ENCODE measurements at regions of chr2 and their contacts with region 1.

Region 1: GRCh38 chr2:25041928-25042320 is at the start of gene EFR3B:
- DNase-seq: peak; percentile 96 to 98
- H3K4me3 ChIP-seq: peak within 1 kb of the TSS; percentile 62
- H3K4me3 Mint-ChIP-seq: peak within 1 kb of the TSS; percentile 82
- H3K27ac Mint-ChIP-seq: peak within 1 kb of the TSS; percentile 11
- H3K4me1 ChIP-seq: peaks cover 5% of the 10 kb centered on the region; the same call in 1 of the 2 replicates
- H3K4me1 Mint-ChIP-seq: peaks cover 12% of the 10 kb centered on the region
- H3K27me3 ChIP-seq: no peaks in the 10 kb centered on the region
- H3K27me3 Mint-ChIP-seq: no peaks in the 10 kb centered on the region
- CTCF ChIP-seq: no peak
- total RNA-seq, gene EFR3B: 14.5 and 19.1 TPM in 2 replicates

Region 2: DNA sequence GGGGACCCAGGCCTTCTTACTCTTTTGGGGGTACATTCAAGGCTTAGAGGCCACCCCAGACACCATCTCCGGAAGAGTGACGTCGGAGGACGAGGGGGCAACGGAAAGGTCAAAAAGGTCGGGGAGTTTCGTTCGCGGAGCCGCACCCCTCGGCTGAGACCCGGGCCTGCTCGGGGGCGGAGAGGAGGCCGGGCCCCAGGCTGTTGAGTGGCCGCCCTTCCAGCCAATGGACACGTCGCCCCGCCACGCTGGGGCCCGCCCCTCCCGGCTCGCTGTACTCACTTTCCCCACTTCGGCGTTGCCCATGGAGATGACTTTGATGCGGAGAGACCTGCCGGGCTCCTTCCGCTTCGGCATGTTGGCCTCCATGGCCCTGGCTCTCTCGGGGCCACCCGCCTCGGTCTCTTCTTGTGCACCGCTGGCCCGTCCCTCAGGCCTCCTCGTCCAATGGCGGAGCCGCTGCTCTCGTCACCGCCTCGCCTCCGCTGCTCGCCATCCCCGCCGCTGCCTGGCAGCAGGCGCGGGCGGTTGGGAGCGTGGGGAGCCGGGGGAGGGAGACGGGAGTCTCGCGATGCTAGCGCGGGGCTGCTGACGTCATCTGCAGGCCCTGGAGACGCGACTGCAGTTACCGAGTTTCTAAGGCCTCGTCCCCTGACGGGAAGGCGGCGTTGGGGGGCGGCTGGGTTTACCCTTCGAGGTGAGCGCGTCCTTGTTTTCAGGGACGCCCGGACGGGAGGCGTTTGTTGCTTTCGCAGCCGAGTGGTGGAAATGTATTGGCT is 70.2 kb before region 1 on chr2 and contains the start of gene DNAJC27:
- CTCF ChIA-PET with region 1: interaction called, 18 read pairs
- POLR2A ChIA-PET with region 1: no interaction called
- intact Hi-C with region 1: loop called (anchors 1 kb)
- DNase-seq: peak; percentile 98
- H3K4me3 ChIP-seq: peak within 1 kb of the TSS; percentile 55
- H3K4me3 Mint-ChIP-seq: peak within 1 kb of the TSS; percentile 90
- H3K27ac Mint-ChIP-seq: peak within 1 kb of the TSS; percentile 98
- H3K4me1 ChIP-seq: no peaks in the 10 kb centered on the region
- H3K4me1 Mint-ChIP-seq: no peaks in the 10 kb centered on the region
- H3K27me3 ChIP-seq: no peaks in the 10 kb centered on the region
- H3K27me3 Mint-ChIP-seq: no peaks in the 10 kb centered on the region
- CTCF ChIP-seq: no peak
- total RNA-seq, gene DNAJC27: 5.1 and 6.1 TPM in 2 replicates

Region 3: GRCh38 chr2:25009954-25010353 is 32.0 kb before region 1 on chr2:
- CTCF ChIA-PET with region 1: no interaction called
- POLR2A ChIA-PET with region 1: no interaction called
- intact Hi-C with region 1: loop called (anchors 5 kb)
- DNase-seq: no peak
- H3K4me3 ChIP-seq: no peak overlapping the region
- H3K4me3 Mint-ChIP-seq: no peak overlapping the region
- H3K27ac Mint-ChIP-seq: no peak overlapping the region
- H3K4me1 ChIP-seq: peaks cover 6% of the 10 kb centered on the region
- H3K4me1 Mint-ChIP-seq: peaks cover 9% of the 10 kb centered on the region
- H3K27me3 ChIP-seq: no peaks in the 10 kb centered on the region
- H3K27me3 Mint-ChIP-seq: no peaks in the 10 kb centered on the region
- CTCF ChIP-seq: no peak

Region 4: DNA sequence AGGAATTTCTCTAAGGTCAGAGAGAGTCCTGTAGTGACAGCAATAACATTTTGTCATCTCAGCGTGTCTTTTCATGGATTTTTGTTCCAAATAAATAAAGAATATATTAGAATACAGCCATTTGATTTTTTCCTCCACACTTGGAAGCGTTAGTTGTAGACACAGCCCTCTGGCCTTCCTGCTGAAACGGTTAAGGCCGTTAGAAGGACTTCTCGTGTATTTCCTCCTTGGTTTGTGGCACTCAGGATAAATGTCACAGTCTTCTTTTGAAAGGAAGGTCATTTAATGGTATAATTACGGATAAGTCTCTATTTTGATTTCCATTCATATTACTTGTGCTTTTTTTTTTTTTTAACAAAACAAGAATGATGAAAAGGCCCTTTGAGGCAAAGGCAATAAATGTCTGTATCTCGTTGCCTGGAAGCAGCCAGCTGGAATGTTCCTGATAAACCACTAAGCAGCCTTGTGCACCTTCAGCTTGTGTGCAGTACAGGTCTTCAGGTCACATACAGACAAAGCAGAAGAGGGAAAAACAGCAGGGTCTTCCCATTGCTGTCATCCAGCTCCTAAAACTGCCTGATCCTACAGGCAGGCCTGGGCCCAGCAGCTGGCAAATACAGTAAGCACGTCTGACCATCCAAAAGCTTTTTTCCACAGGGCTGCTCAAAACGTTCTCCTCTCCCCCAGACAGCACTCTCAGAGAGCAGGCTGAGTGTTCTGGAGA is 14.3 kb after region 1 on chr2:
- CTCF ChIA-PET with region 1: interaction called, 7 read pairs
- POLR2A ChIA-PET with region 1: interaction called, 5 read pairs
- intact Hi-C with region 1: loop called (anchors 1 kb)
- DNase-seq: peak in 1 of 2 experiments; percentile 57
- H3K4me3 ChIP-seq: no peak overlapping the region
- H3K4me3 Mint-ChIP-seq: no peak overlapping the region
- H3K27ac Mint-ChIP-seq: peak overlapping the region; percentile 77
- H3K4me1 ChIP-seq: peaks cover 25% of the 10 kb centered on the region
- H3K4me1 Mint-ChIP-seq: peaks cover 17% of the 10 kb centered on the region
- H3K27me3 ChIP-seq: no peaks in the 10 kb centered on the region
- H3K27me3 Mint-ChIP-seq: no peaks in the 10 kb centered on the region
- CTCF ChIP-seq: no peak

Region 5: DNA sequence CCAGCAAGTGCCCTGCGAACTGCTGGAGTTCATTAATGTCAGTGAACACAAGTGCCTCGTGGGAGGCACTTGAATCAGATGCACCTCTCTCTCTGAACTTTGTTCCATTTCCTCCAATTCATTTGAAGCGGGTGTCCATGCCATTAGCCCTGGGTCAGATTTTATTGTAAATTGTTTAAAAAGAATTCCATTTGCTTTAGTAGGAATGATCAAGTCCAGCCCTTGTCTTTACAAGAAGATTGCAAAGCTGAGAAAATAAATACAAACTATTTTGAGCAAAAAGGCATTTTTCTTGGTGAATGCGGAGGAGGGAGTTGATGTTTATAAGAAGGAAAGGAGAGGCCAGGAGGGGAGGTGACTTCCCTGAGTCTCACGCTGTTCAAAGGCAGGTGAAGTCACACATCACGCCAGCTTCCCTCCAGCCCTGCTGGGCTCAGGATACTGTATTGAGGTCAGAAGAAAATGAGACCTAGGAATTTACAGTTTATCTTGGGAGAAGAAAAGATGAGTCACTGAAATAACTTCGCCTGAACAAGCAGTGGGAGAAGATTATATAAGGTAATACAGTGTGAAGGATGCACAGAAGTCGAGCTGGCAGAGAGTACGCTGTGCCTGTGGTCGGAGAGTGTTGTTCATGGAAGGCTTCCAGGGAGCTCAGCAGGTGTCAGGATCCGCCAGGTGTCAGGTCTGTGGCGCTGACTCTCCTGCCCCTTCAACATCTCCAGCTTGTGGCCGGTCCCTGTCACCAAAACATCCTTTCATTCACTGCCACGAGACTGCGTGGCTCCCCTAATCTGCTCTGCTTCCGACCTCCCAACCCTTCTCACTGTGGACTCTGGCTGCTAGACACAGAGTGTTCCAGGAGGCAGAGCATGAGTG is 36.5 kb after region 1 on chr2:
- CTCF ChIA-PET with region 1: interaction called, 3 read pairs
- POLR2A ChIA-PET with region 1: no interaction called
- intact Hi-C with region 1: loop called (anchors 2 kb)
- DNase-seq: peak; percentile 56 to 66
- H3K4me3 ChIP-seq: no peak overlapping the region
- H3K4me3 Mint-ChIP-seq: peak overlapping the region; percentile 67
- H3K27ac Mint-ChIP-seq: peak overlapping the region; percentile 71
- H3K4me1 ChIP-seq: peaks cover 17% of the 10 kb centered on the region
- H3K4me1 Mint-ChIP-seq: peaks cover 18% of the 10 kb centered on the region
- H3K27me3 ChIP-seq: no peaks in the 10 kb centered on the region
- H3K27me3 Mint-ChIP-seq: no peaks in the 10 kb centered on the region
- CTCF ChIP-seq: no peak

Region 6: DNA sequence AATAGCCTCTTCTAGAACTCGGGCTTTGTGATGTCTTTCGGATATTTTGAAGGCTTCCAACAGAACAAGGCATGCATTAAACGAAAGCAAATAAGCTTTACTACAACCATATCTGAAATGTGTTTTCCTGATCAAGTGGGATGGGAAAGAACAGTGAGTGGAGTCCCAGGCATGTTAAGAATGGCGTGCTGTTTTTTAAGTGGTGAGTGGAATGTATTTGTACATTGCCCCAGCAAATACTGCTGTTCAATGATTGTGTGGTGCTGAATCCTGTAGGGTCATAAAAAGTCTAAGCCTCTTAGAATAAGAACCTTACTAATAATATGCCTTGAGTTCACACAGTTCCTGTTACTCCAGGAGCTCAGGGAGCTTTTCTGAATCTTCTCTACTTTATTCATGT is 74.0 kb after region 1 on chr2:
- CTCF ChIA-PET with region 1: no interaction called
- POLR2A ChIA-PET with region 1: no interaction called
- intact Hi-C with region 1: loop called (anchors 2 kb)
- DNase-seq: peak; percentile 70 to 75
- H3K4me3 ChIP-seq: no peak overlapping the region
- H3K4me3 Mint-ChIP-seq: peak overlapping the region; percentile 49
- H3K27ac Mint-ChIP-seq: peak overlapping the region; percentile 74
- H3K4me1 ChIP-seq: peaks cover 37% of the 10 kb centered on the region
- H3K4me1 Mint-ChIP-seq: peaks cover 18% of the 10 kb centered on the region
- H3K27me3 ChIP-seq: no peaks in the 10 kb centered on the region
- H3K27me3 Mint-ChIP-seq: no peaks in the 10 kb centered on the region
- CTCF ChIP-seq: no peak

Region 7: GRCh38 chr2:25131567-25132298 is 89.8 kb after region 1 on chr2:
- CTCF ChIA-PET with region 1: interaction called, 26 read pairs
- POLR2A ChIA-PET with region 1: no interaction called
- intact Hi-C with region 1: no loop called
- DNase-seq: peak; percentile 55 to 76
- H3K4me3 ChIP-seq: peak overlapping the region; percentile 27
- H3K4me3 Mint-ChIP-seq: peak overlapping the region; percentile 76
- H3K27ac Mint-ChIP-seq: peak overlapping the region; percentile 49
- H3K4me1 ChIP-seq: peaks cover 16% of the 10 kb centered on the region
- H3K4me1 Mint-ChIP-seq: peaks cover 20% of the 10 kb centered on the region
- H3K27me3 ChIP-seq: no peaks in the 10 kb centered on the region
- H3K27me3 Mint-ChIP-seq: no peaks in the 10 kb centered on the region
- CTCF ChIP-seq: no peak